K562 (cell line): ENCODE measurements at regions of chr5 and their contacts with region 1.

Region 1: DNA sequence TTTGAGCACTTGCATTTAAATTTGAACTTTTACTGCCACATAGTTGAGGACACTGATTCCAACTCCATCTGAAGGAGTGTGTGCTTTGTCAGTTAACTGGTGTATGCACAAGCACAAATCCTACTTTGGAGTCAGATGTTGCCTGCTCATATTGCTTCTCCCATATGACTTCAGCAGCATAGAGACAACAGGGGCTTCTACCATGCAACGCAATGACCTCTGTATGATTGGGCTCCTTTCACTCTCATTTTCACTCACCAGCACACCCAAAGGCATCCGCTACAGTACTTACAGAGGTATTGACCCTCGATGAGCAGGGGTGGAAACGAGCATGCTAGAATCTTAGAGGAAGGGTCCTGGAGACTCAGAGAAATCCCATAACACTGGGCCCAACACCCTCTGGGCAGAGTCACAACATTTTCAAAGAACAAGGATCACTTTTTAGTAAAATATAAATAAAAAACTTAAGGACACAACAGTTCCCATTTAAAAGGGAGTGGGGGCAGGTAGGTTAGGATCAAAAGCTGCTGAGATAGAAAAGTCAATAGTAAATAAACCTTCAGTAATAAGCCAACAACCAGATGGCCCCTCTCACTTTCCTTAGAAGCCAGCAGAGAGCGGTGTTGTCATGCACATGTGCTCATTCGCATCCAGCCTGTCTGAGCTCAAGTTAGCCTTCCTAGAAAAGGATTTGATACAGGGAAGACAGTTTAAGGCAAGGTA is 203.8 kb downstream of the SNCAIP start:
- DNase-seq: peak; percentile 29 to 63 (median 36)
- ATAC-seq: peak; percentile 92
- H3K4me3 ChIP-seq: no peak overlapping the region
- H3K27ac ChIP-seq: no peak overlapping the region
- H3K4me1 ChIP-seq: no peaks in the 10 kb centered on the region
- H3K27me3 ChIP-seq: no peaks in the 10 kb centered on the region; a peak in 1 of 5 replicates
- CTCF ChIP-seq: peak; percentile 63 to 80 (median 67)
- EP300 ChIP-seq: no peak
- POLR2A ChIP-seq: no peak
- RAD21 ChIP-seq: peak; percentile 84 to 89

Region 2: DNA sequence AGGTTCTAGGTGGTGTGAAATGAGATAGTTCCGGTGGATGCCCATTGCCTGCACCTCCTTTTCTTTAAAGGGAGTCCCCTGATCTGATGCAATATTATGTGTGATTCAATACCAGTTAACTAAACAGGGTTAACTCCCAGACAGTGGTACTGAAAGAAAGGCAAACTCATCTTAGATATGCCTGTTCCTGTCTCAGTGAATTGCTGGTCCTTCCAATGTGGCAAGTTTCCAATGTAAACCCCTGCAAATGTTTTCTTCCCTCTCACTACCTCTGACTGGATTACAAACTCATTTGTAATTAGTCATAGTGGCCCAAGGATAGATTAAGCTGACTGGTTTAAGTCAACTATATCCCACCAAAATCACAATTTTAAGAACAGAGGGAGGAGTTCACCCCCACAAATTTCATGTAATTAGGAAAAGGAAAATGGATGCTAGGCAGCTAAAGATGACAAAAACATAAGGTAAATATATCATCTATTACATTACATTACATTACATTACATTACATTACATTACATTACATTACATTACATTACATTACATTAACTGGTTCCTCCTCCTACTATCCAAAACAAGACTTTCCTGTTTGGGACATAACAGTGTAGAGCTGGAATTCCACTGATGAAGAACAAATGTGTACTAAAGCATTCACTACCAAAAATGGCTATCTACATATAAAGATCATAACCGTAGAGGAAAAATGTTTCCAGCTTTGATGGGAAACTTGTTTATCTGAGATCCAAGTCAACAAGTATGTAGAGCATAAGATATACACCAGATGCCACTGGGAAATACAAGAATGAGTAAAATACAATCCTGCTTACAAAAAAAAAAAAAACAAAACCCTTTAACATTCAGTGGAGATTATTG is 137.5 kb after region 1 on chr5:
- CTCF ChIA-PET with region 1: no interaction called
- POLR2A ChIA-PET with region 1: no interaction called
- in situ Hi-C with region 1: no loop called
- intact Hi-C with region 1: no loop called
- DNase-seq: no peak
- ATAC-seq: no peak
- H3K4me3 ChIP-seq: no peak overlapping the region
- H3K27ac ChIP-seq: no peak overlapping the region
- H3K4me1 ChIP-seq: no peaks in the 10 kb centered on the region
- H3K27me3 ChIP-seq: 0 out of 5 replicates have a peak, but pooled peaks cover 0 to 2% of the 10 kb centered on the region in 2 experiments
- CTCF ChIP-seq: no peak
- EP300 ChIP-seq: no peak
- POLR2A ChIP-seq: no peak
- RAD21 ChIP-seq: no peak

Region 3: DNA sequence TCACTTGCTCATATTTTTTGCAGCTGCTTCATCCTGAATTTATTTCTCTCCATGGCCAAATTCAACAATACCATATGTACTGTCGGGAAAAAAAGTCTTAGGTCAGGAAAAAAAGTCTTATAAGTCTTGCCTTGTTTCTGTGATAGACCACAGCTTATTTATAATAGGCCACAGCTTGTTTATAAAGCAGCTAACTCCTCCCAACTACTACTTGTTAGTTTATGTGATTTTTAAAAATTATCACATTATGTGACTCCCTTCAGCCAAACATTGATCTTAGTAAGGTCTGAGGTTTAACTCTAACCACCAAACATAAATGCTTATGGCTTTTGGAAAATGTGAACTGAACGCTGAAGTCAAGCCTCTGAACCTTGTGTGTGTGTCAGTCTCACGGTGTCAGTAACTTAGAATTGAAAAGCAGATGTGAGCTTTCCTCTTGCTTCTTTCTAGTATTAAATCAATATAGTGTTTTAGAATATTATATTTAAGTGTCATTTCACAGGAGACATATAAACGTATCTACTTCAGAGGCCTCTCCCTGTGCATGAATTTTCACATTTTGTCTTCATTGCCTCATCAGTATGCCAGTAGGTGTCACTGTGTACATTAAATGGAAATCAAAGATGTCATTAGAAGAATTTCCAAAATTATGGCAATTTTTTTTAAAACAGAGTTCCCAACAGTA is 380.9 kb after region 1 on chr5:
- CTCF ChIA-PET with region 1: no interaction called
- POLR2A ChIA-PET with region 1: no interaction called
- in situ Hi-C with region 1: no loop called
- intact Hi-C with region 1: loop called (anchors 5 kb)
- DNase-seq: peak in 1 of 4 experiments; percentile 30
- ATAC-seq: no peak
- H3K4me3 ChIP-seq: no peak overlapping the region
- H3K27ac ChIP-seq: no peak overlapping the region
- H3K4me1 ChIP-seq: no peaks in the 10 kb centered on the region
- H3K27me3 ChIP-seq: no peaks in the 10 kb centered on the region
- CTCF ChIP-seq: peak; percentile 26 to 63 (median 30); a peak in 3 of 6 replicates
- EP300 ChIP-seq: no peak
- POLR2A ChIP-seq: no peak
- RAD21 ChIP-seq: peak; percentile 79 to 81

Region 4: GRCh38 chr5:123371575-123372179 is 855.8 kb after region 1 on chr5:
- CTCF ChIA-PET with region 1: no interaction called
- POLR2A ChIA-PET with region 1: no interaction called
- in situ Hi-C with region 1: loop called (anchors 25 kb)
- intact Hi-C with region 1: no loop called
- DNase-seq: peak; percentile 31 to 46 (median 40)
- ATAC-seq: peak; percentile 68
- H3K4me3 ChIP-seq: no peak overlapping the region
- H3K27ac ChIP-seq: no peak overlapping the region
- H3K4me1 ChIP-seq: no peaks in the 10 kb centered on the region
- H3K27me3 ChIP-seq: no peaks in the 10 kb centered on the region
- CTCF ChIP-seq: peak; percentile 44 to 55 (median 46); a peak in 5 of 6 replicates
- EP300 ChIP-seq: no peak
- POLR2A ChIP-seq: no peak
- RAD21 ChIP-seq: no peak